PC-3 (cell line): ENCODE measurements at regions of chr5 and their contacts with region 1.

Region 1: GRCh38 chr5:9239071-9239470 is 306.8 kb downstream of the SEMA5A start:
- DNase-seq: peak; percentile 66
- ATAC-seq: peak; percentile 48
- H3K4me3 ChIP-seq: peak overlapping the region; percentile 7; the same call in 1 of the 2 replicates
- H3K27ac ChIP-seq: peak overlapping the region; percentile 60
- H3K4me1 ChIP-seq: peaks cover 30% of the 10 kb centered on the region
- H3K27me3 ChIP-seq: no peaks in the 10 kb centered on the region
- CTCF ChIP-seq: no peak

Region 2: DNA sequence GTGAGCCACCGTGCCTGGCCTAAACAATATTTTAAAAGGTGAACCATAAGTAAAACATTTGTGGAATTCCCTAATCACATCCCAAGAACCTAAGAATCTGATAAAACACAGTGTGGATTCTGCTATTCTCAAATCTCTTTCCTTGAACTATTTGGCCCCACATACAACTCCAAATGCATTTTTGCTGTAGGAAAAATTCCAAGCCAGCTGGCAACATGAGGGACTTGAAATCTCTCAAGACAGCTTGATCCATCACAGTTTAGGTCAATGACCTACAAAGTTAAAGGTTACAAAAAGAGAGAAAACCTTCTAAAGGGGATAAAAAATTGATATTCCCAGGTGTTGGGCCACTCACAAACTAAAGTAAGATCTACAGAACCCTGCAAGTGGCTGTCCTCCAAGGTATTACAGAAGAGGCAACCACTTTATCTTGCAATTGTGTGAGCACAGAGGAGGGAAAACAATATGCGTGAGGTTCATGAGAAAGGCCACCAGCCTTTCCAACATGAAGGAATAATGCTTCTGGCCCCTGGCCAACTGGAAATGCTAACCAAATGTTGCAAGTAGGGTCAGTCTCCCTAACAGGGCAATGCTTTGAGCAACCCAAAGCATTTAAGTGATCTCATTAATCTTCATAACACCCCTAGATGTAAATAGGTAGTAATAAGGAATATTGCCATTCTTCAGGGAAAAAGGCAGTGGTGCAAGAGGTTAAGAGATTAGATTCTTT is 85.4 kb after region 1 on chr5:
- CTCF ChIA-PET with region 1: no interaction called
- POLR2A ChIA-PET with region 1: no interaction called
- intact Hi-C with region 1: loop called (anchors 2 kb)
- DNase-seq: no peak
- ATAC-seq: no peak
- H3K4me3 ChIP-seq: no peak overlapping the region
- H3K27ac ChIP-seq: no peak overlapping the region
- H3K4me1 ChIP-seq: peaks cover 17% of the 10 kb centered on the region
- H3K27me3 ChIP-seq: no peaks in the 10 kb centered on the region
- CTCF ChIP-seq: no peak

Region 3: DNA sequence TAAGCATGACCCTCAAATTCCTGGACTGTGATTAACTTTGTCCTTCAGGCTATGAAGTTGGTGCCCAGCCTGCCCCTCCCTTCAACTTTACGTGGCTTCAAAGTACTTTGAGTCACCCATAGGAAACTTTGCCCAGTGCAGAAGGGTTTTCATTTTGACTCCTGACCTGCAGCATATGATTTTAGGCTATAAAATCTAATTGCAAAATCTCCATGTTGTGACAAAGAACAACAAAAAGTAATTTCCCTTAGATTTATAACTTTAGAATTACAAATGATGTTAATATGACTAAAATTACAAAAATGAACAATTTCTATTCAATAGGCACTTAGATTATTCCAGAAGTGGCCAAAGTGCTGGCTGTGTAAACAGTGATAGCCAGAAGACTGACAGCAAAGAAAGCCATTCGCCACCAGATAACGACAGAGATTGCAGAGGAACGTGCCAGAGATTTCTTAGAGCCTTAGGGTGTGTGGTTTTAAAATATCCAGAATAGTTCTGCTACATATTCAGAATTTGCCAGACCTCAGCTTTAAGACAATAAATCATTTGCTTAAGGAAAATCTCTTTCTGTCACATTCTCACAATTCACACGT is 109.4 kb after region 1 on chr5:
- CTCF ChIA-PET with region 1: no interaction called
- POLR2A ChIA-PET with region 1: no interaction called
- intact Hi-C with region 1: loop called (anchors 2 kb)
- DNase-seq: peak; percentile 98
- ATAC-seq: peak; percentile 92
- H3K4me3 ChIP-seq: peak overlapping the region; percentile 33
- H3K27ac ChIP-seq: peak overlapping the region; percentile 44
- H3K4me1 ChIP-seq: peaks cover 36% of the 10 kb centered on the region
- H3K27me3 ChIP-seq: no peaks in the 10 kb centered on the region
- CTCF ChIP-seq: no peak

Region 4: GRCh38 chr5:9473624-9474023 is 234.6 kb after region 1 on chr5:
- CTCF ChIA-PET with region 1: no interaction called
- POLR2A ChIA-PET with region 1: no interaction called
- intact Hi-C with region 1: no loop called
- DNase-seq: no peak
- ATAC-seq: no peak
- H3K4me3 ChIP-seq: no peak overlapping the region
- H3K27ac ChIP-seq: no peak overlapping the region
- H3K4me1 ChIP-seq: peaks cover under 1% of the 10 kb centered on the region
- H3K27me3 ChIP-seq: no peaks in the 10 kb centered on the region
- CTCF ChIP-seq: no peak